Caco-2 (cell line): ENCODE measurements at regions of chr4 and their contacts with region 1.

Region 1: GRCh38 chr4:10622728-10623127 is 61.8 kb downstream of the CLNK start:
- DNase-seq: no peak
- H3K4me3 ChIP-seq: no peak overlapping the region
- H3K4me3 Mint-ChIP-seq: no peak overlapping the region
- H3K27ac Mint-ChIP-seq: no peak overlapping the region
- H3K4me1 ChIP-seq: peaks cover 29% of the 10 kb centered on the region
- H3K4me1 Mint-ChIP-seq: peaks cover 20% of the 10 kb centered on the region
- H3K27me3 ChIP-seq: no peaks in the 10 kb centered on the region
- H3K27me3 Mint-ChIP-seq: no peaks in the 10 kb centered on the region
- CTCF ChIP-seq: no peak

Region 2: GRCh38 chr4:10655986-10656385 is 33.3 kb after region 1 on chr4:
- CTCF ChIA-PET with region 1: no interaction called
- POLR2A ChIA-PET with region 1: no interaction called
- intact Hi-C with region 1: loop called (anchors 5 kb)
- DNase-seq: no peak
- H3K4me3 ChIP-seq: no peak overlapping the region
- H3K4me3 Mint-ChIP-seq: no peak overlapping the region
- H3K27ac Mint-ChIP-seq: no peak overlapping the region
- H3K4me1 ChIP-seq: peaks cover 24% of the 10 kb centered on the region
- H3K4me1 Mint-ChIP-seq: peaks cover 23% of the 10 kb centered on the region
- H3K27me3 ChIP-seq: no peaks in the 10 kb centered on the region
- H3K27me3 Mint-ChIP-seq: no peaks in the 10 kb centered on the region
- CTCF ChIP-seq: no peak

Region 3: DNA sequence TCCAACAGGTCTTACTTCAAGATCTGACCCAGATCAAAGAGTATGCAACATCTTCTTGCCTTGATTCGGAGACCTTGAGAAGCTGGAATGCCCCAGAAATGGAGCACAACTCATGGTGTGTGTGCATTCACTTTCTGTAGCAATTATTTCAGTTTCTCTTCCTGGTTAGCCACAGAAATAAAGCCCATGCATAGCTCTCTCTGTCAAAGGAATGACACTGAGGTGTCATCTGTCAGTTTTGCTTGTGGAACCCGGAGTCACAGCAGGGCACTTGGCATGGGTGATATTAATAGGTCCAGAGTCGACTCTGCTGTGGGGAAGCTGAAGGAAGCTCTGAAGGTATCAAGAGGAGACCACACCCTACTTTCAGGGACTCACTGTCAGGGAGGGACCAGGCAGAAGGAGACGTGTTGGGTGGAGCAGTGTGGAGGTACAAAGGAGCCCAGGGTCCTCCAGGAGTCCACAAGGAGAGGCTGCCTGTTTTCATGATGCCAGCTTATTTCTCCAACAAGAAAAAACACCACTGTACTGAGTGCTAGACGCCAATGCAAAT is 51.2 kb after region 1 on chr4:
- CTCF ChIA-PET with region 1: no interaction called
- POLR2A ChIA-PET with region 1: no interaction called
- intact Hi-C with region 1: loop called (anchors 2 kb)
- DNase-seq: no peak
- H3K4me3 ChIP-seq: no peak overlapping the region
- H3K4me3 Mint-ChIP-seq: no peak overlapping the region
- H3K27ac Mint-ChIP-seq: no peak overlapping the region
- H3K4me1 ChIP-seq: peaks cover 12% of the 10 kb centered on the region
- H3K4me1 Mint-ChIP-seq: peaks cover 7% of the 10 kb centered on the region
- H3K27me3 ChIP-seq: no peaks in the 10 kb centered on the region
- H3K27me3 Mint-ChIP-seq: no peaks in the 10 kb centered on the region
- CTCF ChIP-seq: no peak

Region 4: GRCh38 chr4:10743357-10743756 is 120.6 kb after region 1 on chr4:
- CTCF ChIA-PET with region 1: no interaction called
- POLR2A ChIA-PET with region 1: no interaction called
- intact Hi-C with region 1: no loop called
- DNase-seq: no peak
- H3K4me3 ChIP-seq: no peak overlapping the region
- H3K4me3 Mint-ChIP-seq: no peak overlapping the region
- H3K27ac Mint-ChIP-seq: no peak overlapping the region
- H3K4me1 ChIP-seq: no peaks in the 10 kb centered on the region
- H3K4me1 Mint-ChIP-seq: peaks cover 7% of the 10 kb centered on the region
- H3K27me3 ChIP-seq: no peaks in the 10 kb centered on the region
- H3K27me3 Mint-ChIP-seq: no peaks in the 10 kb centered on the region
- CTCF ChIP-seq: no peak

Region 5: GRCh38 chr4:10832806-10833628 is 210.3 kb after region 1 on chr4:
- CTCF ChIA-PET with region 1: no interaction called
- POLR2A ChIA-PET with region 1: no interaction called
- intact Hi-C with region 1: loop called (anchors 5 kb)
- DNase-seq: no peak
- H3K4me3 ChIP-seq: no peak overlapping the region
- H3K4me3 Mint-ChIP-seq: no peak overlapping the region
- H3K27ac Mint-ChIP-seq: no peak overlapping the region
- H3K4me1 ChIP-seq: peaks cover 52% of the 10 kb centered on the region
- H3K4me1 Mint-ChIP-seq: peaks cover 41% of the 10 kb centered on the region
- H3K27me3 ChIP-seq: no peaks in the 10 kb centered on the region
- H3K27me3 Mint-ChIP-seq: no peaks in the 10 kb centered on the region
- CTCF ChIP-seq: no peak

Region 6: GRCh38 chr4:10942156-10942555 is 319.4 kb after region 1 on chr4:
- CTCF ChIA-PET with region 1: no interaction called
- POLR2A ChIA-PET with region 1: no interaction called
- intact Hi-C with region 1: no loop called
- DNase-seq: no peak
- H3K4me3 ChIP-seq: no peak overlapping the region
- H3K4me3 Mint-ChIP-seq: no peak overlapping the region
- H3K27ac Mint-ChIP-seq: no peak overlapping the region
- H3K4me1 ChIP-seq: no peaks in the 10 kb centered on the region
- H3K4me1 Mint-ChIP-seq: peaks cover 5% of the 10 kb centered on the region
- H3K27me3 ChIP-seq: no peaks in the 10 kb centered on the region
- H3K27me3 Mint-ChIP-seq: no peaks in the 10 kb centered on the region
- CTCF ChIP-seq: no peak

Region 7: DNA sequence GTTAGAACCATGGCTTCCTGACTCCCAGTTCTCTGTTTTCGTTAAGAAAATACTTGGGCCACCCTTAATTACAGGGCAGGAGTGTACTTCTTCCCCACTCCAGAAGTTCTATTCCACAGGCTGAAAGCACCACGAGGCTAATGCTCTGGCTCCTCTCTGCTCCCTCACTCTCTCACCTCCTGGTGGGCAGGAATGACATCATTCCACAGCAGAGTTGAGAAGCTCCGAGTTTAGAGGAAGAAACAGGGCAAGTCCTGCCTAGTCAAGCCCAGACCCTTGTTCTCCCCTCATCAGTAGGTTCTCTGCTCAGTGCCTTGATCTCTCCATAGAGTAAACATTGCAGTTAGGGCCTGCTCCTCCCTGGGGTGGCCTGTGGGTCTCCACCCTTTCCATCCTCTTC is 405.6 kb after region 1 on chr4:
- CTCF ChIA-PET with region 1: no interaction called
- POLR2A ChIA-PET with region 1: no interaction called
- intact Hi-C with region 1: no loop called
- DNase-seq: no peak
- H3K4me3 ChIP-seq: no peak overlapping the region
- H3K4me3 Mint-ChIP-seq: no peak overlapping the region
- H3K27ac Mint-ChIP-seq: no peak overlapping the region
- H3K4me1 ChIP-seq: peaks cover 8% of the 10 kb centered on the region
- H3K4me1 Mint-ChIP-seq: peaks cover 16% of the 10 kb centered on the region
- H3K27me3 ChIP-seq: no peaks in the 10 kb centered on the region
- H3K27me3 Mint-ChIP-seq: no peaks in the 10 kb centered on the region
- CTCF ChIP-seq: no peak